RWPE1 (cell line): ENCODE measurements at regions of chr2 and their contacts with region 1.

Region 1: DNA sequence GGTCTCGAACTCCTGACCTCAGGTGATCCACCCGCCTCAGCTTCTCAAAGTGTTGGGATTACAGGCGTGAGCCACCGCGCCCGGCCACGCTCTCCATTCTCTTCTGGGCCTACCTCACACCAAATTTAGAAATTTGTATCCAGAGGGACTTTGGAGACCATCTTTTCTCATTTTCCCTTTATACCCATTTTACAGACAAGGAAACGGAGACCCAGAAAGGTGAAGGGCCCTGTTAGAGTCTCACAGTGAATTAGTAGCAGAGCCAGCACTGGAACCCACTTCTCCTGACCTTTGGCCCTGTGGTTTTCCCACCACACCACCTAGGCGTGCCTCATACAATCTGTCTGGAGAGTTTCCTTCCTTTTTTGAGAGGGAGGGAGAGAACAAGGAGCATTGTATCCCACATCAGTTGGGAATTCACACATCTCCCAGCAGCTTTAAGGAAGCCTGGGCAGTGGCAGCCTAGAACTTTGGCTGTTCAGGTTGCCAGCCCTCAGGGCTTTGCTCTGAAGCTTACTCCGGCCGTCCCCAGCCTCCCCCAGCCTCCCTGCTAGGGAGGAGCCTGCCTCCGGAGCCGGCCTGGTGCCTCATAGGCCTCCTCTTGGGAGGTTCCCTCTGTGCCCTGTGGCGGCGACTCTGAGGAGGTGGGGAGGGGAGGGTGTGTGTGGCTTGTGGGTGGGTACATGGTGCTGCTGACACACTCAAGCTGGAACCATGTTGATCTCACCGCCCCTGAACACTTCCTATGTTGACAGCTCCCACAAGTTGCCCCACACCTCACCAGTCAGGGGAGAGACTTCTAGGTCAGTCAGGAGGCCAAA is 13.8 kb downstream of the FOSL2 start:
- DNase-seq: no peak
- H3K27ac ChIP-seq: peak overlapping the region; percentile 93
- CTCF ChIP-seq: no peak

Region 2: DNA sequence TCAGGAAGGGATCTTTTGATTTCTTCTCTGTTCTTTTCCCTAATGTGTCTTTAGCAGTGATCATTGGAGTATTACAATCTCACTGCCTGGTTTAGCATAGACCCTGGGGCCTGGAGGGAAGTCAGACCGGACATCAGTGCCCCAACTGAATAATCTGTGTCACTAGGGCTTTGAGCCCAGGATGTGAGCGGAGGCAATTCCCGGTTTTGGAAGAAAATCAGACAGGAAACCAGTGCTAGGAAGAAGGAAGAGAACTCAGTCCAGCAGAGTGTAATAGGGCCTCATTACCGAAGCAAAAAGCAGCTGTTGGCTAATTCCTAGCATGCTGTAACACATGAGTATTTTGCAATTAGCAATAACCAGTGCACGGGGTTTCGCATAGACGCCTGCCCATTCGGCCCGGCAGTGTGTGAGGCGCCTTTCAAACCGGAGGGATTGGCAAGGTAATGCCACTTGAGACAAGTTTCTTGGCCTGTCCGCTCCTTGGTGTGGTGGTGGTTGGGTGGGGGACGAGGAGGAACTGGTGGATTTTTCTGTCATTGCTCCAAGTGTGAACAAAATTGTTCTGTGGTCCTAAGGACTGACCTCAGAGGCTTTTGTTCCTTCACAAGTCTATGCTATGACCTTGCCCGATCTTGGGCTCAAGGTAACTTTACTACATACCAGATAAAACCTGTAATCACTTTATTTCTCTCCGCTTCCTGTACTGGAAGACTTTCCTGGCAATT is 11.0 kb before region 1 on chr2:
- CTCF ChIA-PET with region 1: interaction called, 11 read pairs
- POLR2A ChIA-PET with region 1: interaction called, 4 read pairs
- DNase-seq: peak; percentile 28
- H3K27ac ChIP-seq: peak overlapping the region; percentile 100
- CTCF ChIP-seq: no peak

Region 3: GRCh38 chr2:28423856-28424605 is 17.5 kb after region 1 on chr2:
- CTCF ChIA-PET with region 1: no interaction called
- POLR2A ChIA-PET with region 1: no interaction called
- DNase-seq: no peak
- H3K27ac ChIP-seq: 0 out of 2 replicates have a peak overlapping the region, but pooled peaks have one; percentile 6
- CTCF ChIP-seq: no peak